Endothelial cell of umbilical vein (primary cell): ENCODE measurements at regions of chr19 and their contacts with region 1.

Region 1: GRCh38 chr19:31132753-31133110 is 216.5 kb downstream of the TSHZ3 start:
- DNase-seq: no peak
- H3K4me3 ChIP-seq: no peak overlapping the region
- H3K27ac ChIP-seq: no peak overlapping the region
- H3K4me1 ChIP-seq: no peaks in the 10 kb centered on the region
- H3K27me3 ChIP-seq: no peaks in the 10 kb centered on the region
- CTCF ChIP-seq: no peak
- POLR2A ChIP-seq: no peak

Region 2: DNA sequence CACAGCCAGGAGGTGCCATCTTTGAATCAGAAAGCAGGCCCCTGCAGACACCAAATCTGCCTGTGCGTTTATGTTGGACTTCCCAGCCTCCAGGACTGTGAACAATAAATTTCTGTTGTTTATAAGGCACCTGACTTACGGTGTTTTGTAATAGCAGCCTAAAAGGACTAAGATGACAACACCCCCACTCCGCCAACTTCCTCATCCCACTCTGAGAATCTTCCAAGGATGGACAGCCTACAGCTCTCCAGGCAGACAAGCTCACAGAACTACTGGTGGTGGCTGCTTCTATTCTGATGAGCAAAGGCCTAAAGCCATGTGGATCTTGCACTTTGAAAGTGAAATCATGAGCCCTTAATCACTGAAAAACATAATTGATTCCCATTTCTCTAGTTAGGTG is 232.7 kb before region 1 on chr19:
- CTCF ChIA-PET with region 1: no interaction called
- POLR2A ChIA-PET with region 1: no interaction called
- dilution Hi-C with region 1: no loop called
- intact Hi-C with region 1: loop called (anchors 5 kb)
- DNase-seq: no peak
- H3K4me3 ChIP-seq: no peak overlapping the region
- H3K27ac ChIP-seq: no peak overlapping the region
- H3K4me1 ChIP-seq: no peaks in the 10 kb centered on the region
- H3K27me3 ChIP-seq: no peaks in the 10 kb centered on the region
- CTCF ChIP-seq: no peak
- POLR2A ChIP-seq: no peak